ENCODE measurements at regions of chr5 and their contacts with region 1.

Region 1: DNA sequence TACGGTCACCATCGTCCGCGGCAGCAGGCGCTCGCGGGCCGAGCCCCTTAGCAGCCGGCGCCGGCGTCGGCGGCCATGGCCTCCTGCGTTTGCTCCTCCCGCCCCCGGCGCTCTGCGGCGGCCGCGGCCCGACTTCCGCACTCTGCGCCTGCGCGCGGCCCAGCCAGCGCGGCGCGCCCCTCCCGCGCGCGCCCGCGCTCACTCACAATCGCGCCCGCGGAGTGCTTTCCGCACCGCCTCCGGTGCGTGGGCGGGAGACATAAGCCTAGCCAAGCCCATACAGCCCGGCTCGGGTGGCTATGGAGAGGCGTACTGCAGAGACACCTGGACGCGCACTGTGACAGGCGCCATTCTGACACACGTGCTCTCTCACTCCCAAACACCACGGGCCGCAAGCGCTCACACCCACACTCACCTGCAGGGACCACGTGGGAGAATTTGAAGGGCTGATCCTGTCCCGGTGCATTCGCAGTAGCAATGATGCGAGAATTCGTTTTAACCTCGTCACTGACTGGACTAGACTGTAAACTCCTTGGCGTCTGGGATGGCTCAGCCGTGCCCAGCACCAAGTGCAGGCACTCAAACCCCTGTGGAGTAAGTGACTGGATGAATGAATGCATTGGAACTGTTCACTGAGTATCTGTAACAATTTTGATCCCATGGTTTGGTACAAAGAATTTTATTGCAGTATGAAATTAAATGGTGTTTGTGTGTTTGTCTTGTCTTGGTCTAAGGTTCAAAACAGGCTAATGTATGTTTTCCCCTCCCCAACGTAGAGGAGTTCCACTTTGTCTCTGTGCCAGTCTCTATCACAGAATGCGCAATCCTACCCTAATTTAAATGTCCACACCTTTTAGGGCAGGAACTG is at the start of gene RNF145:
- DNase-seq: peak; percentile 79 to 86
- H3K4me3 ChIP-seq: peak within 1 kb of the TSS; percentile 73
- H3K27ac ChIP-seq: peak within 1 kb of the TSS; percentile 86
- H3K4me1 ChIP-seq: peaks cover 34% of the 10 kb centered on the region
- H3K27me3 ChIP-seq: no peaks in the 10 kb centered on the region
- CTCF ChIP-seq: no peak
- total RNA-seq, gene RNF145: 48.2 and 54.5 TPM in 2 replicates

Region 2: GRCh38 chr5:159163027-159163700 is 46.5 kb before region 1 on chr5:
- CTCF ChIA-PET with region 1: no interaction called
- POLR2A ChIA-PET with region 1: interaction called, 5 read pairs
- intact Hi-C with region 1: loop called (anchors 5 kb)
- DNase-seq: no peak
- H3K4me3 ChIP-seq: no peak overlapping the region
- H3K27ac ChIP-seq: no peak overlapping the region
- H3K4me1 ChIP-seq: no peaks in the 10 kb centered on the region
- H3K27me3 ChIP-seq: no peaks in the 10 kb centered on the region
- CTCF ChIP-seq: no peak

Region 3: DNA sequence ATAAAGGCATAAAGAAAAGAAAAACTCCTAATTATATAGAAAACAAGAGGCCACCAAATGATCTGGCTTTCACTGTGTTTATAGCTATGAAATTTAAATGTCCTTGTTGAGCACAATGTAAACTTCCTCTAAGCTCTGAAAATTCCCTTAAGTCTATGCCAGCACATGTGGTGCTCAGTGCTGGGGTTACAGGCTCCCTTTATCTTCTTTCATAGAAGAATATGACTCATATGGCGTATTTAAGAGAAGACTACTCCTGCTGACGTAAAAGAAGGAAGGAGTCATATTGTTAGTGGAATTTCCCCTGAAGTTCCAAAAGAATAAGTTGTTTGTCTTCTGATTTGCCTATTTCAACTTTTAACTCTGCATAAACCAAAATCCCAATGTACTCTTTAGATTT is 30.7 kb before region 1 on chr5:
- CTCF ChIA-PET with region 1: no interaction called
- POLR2A ChIA-PET with region 1: no interaction called
- intact Hi-C with region 1: loop called (anchors 1 kb)
- DNase-seq: peak; percentile 31 to 68
- H3K4me3 ChIP-seq: no peak overlapping the region
- H3K27ac ChIP-seq: peak overlapping the region; percentile 38
- H3K4me1 ChIP-seq: peaks cover 37% of the 10 kb centered on the region
- H3K27me3 ChIP-seq: no peaks in the 10 kb centered on the region
- CTCF ChIP-seq: no peak

Region 4: GRCh38 chr5:159240301-159240870 is 30.7 kb after region 1 on chr5:
- CTCF ChIA-PET with region 1: no interaction called
- POLR2A ChIA-PET with region 1: interaction called, 6 read pairs
- intact Hi-C with region 1: loop called (anchors 2 kb)
- DNase-seq: peak; percentile 49 to 92
- H3K4me3 ChIP-seq: no peak overlapping the region
- H3K27ac ChIP-seq: 0 out of 2 replicates have a peak overlapping the region, but pooled peaks have one; percentile 37
- H3K4me1 ChIP-seq: peaks cover 12% of the 10 kb centered on the region
- H3K27me3 ChIP-seq: no peaks in the 10 kb centered on the region
- CTCF ChIP-seq: no peak

Region 5: GRCh38 chr5:159252195-159252594 is 42.5 kb after region 1 on chr5:
- CTCF ChIA-PET with region 1: no interaction called
- POLR2A ChIA-PET with region 1: no interaction called
- intact Hi-C with region 1: no loop called
- DNase-seq: no peak
- H3K4me3 ChIP-seq: no peak overlapping the region
- H3K27ac ChIP-seq: no peak overlapping the region
- H3K4me1 ChIP-seq: no peaks in the 10 kb centered on the region
- H3K27me3 ChIP-seq: no peaks in the 10 kb centered on the region
- CTCF ChIP-seq: no peak

Region 6: DNA sequence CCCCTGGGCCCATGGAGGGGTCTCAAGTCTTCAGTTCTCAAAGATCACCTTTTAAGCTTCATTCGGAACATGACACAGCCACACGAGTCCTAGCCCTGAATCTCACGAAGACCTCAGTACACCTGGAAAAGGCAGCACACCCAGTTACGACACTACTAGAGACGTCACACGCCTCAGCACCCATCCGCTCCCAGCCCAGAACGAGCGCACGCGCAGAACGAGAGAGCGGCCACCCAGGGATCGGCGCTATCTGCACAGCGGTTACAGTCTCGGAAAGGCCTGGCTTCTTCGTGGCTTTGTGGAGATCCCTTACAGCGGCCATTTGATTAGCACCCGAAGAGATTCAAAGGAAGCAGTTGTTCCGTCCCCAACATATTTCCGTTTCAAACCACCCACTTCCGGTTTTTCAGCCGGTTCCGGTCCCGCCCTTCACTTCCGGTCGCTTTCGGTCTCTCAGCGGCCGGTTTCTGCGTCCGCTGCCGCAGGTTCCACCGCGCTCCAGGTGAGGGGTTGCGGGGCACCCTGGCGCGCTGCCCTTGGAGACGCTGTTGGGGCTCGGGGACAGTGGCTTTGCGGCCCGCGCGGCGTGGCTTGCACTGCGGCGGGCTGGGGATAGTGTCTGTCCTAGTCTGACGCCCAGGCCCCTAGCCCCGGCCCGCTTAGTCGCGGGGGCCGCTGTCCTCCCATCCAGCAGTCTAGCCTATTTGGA is 53.3 kb after region 1 on chr5 and contains the start of gene UBLCP1:
- CTCF ChIA-PET with region 1: no interaction called
- POLR2A ChIA-PET with region 1: no interaction called
- intact Hi-C with region 1: loop called (anchors 1 kb)
- DNase-seq: peak; percentile 76 to 78
- H3K4me3 ChIP-seq: peak within 1 kb of the TSS; percentile 91
- H3K27ac ChIP-seq: peak within 1 kb of the TSS; percentile 80
- H3K4me1 ChIP-seq: peaks cover 19% of the 10 kb centered on the region
- H3K27me3 ChIP-seq: no peaks in the 10 kb centered on the region
- CTCF ChIP-seq: no peak
- total RNA-seq, gene UBLCP1: 22.1 and 27.8 TPM in 2 replicates

Region 7: GRCh38 chr5:159386028-159386711 is 176.5 kb after region 1 on chr5:
- CTCF ChIA-PET with region 1: no interaction called
- POLR2A ChIA-PET with region 1: no interaction called
- intact Hi-C with region 1: no loop called
- DNase-seq: no peak
- H3K4me3 ChIP-seq: no peak overlapping the region
- H3K27ac ChIP-seq: no peak overlapping the region
- H3K4me1 ChIP-seq: no peaks in the 10 kb centered on the region
- H3K27me3 ChIP-seq: no peaks in the 10 kb centered on the region; the same call in 1 of the 2 replicates
- CTCF ChIP-seq: no peak

Measured in PC-9 (cell line).